Spleen (tissue), 13 donors: ENCODE measurements at regions of chr15 and their contacts with region 1.

Region 1: GRCh38 chr15:96356494-96357455 is 26.3 kb downstream of the NR2F2 start:
- DNase-seq: peak; percentile 87
- H3K4me3 ChIP-seq: peak overlapping the region; percentile 46 to 84 (median 61)
- H3K27ac ChIP-seq: peak overlapping the region; percentile 55 to 93 (median 90)
- H3K4me1 ChIP-seq: peaks cover 6 to 86% (median 48%) of the 10 kb centered on the region in 6 donors
- H3K27me3 ChIP-seq: peaks cover 0 to 100% (median 75%) of the 10 kb centered on the region in 7 donors
- CTCF ChIP-seq: peak; percentile 88 to 97 (median 94)
- POLR2A ChIP-seq: no peak

Region 2: GRCh38 chr15:96889734-96890480 is 533.1 kb after region 1 on chr15:
- intact Hi-C with region 1: loop called (anchors 5 kb)
- DNase-seq: no peak
- H3K4me3 ChIP-seq: peak overlapping the region; percentile 10 to 61 (median 21)
- H3K27ac ChIP-seq: peak overlapping the region; percentile 45 to 75 (median 68)
- H3K4me1 ChIP-seq: peaks cover 0 to 22% (median 0%) of the 10 kb centered on the region in 6 donors
- H3K27me3 ChIP-seq: no peaks in the 10 kb centered on the region
- CTCF ChIP-seq: no peak
- POLR2A ChIP-seq: no peak

Region 3: DNA sequence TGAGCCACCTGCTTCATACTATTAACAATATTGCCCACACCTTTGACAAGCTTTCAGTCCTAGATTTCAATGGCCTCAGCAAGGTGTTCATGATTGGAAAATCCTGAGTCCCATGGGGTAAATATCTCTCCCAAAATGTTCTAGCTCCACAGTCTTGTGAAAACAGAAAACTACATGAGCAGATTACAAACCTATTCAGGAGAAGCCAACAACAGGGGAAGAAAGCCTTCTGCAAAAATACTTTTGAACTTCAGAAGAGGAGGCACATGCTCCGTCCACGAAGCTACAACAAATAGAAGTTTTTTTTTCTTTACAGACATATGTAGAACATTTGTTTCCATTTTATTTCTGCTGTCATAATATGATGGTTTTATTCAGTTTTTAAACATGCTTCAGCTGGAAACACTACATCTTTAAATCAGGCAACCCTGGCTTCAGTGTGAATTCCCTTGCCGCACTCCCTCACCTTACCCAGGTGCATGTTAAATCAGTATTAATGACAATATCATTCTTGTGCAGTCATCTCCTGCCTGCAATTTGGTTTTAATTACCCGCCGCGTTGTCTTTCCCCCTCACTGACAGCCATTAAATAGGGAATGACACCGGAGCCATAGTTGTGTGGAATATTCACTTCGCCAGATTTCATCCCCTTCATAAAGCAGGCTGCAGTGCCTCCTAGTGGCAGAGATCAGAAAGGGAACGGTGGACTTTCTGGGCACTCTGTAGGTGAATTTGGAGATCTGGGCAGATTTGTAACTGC is 878.3 kb after region 1 on chr15:
- intact Hi-C with region 1: loop called (anchors 10 kb)
- DNase-seq: no peak
- H3K4me3 ChIP-seq: peak overlapping the region in 6 of 8 donors; percentile 0 to 58 (median 14)
- H3K27ac ChIP-seq: peak overlapping the region in 6 of 8 donors; percentile 16 to 44 (median 32)
- H3K4me1 ChIP-seq: peaks cover 0 to 10% (median 2%) of the 10 kb centered on the region in 6 donors
- H3K27me3 ChIP-seq: no peaks in the 10 kb centered on the region
- CTCF ChIP-seq: peak; percentile 50 to 89 (median 74)
- POLR2A ChIP-seq: no peak